ENCODE measurements at regions of chr18 and their contacts with region 1.

Region 1: GRCh38 chr18:11654736-11655605 is 34.1 kb upstream of the GNAL start:
- DNase-seq: peak in 1 of 2 experiments; percentile 79
- H3K4me3 ChIP-seq: no peak overlapping the region
- H3K4me3 Mint-ChIP-seq: peak overlapping the region; percentile 44
- H3K27ac Mint-ChIP-seq: no peak overlapping the region
- H3K4me1 ChIP-seq: no peaks in the 10 kb centered on the region
- H3K4me1 Mint-ChIP-seq: no peaks in the 10 kb centered on the region
- H3K27me3 ChIP-seq: no peaks in the 10 kb centered on the region
- H3K27me3 Mint-ChIP-seq: peaks cover 10% of the 10 kb centered on the region
- CTCF ChIP-seq: peak; percentile 83 to 88

Region 2: GRCh38 chr18:11695736-11696135 is 40.8 kb after region 1 on chr18:
- CTCF ChIA-PET with region 1: no interaction called
- POLR2A ChIA-PET with region 1: no interaction called
- intact Hi-C with region 1: no loop called
- DNase-seq: no peak
- H3K4me3 ChIP-seq: no peak overlapping the region
- H3K4me3 Mint-ChIP-seq: no peak overlapping the region
- H3K27ac Mint-ChIP-seq: no peak overlapping the region
- H3K4me1 ChIP-seq: no peaks in the 10 kb centered on the region
- H3K4me1 Mint-ChIP-seq: peaks cover 9% of the 10 kb centered on the region
- H3K27me3 ChIP-seq: no peaks in the 10 kb centered on the region
- H3K27me3 Mint-ChIP-seq: no peaks in the 10 kb centered on the region
- CTCF ChIP-seq: no peak

Region 3: DNA sequence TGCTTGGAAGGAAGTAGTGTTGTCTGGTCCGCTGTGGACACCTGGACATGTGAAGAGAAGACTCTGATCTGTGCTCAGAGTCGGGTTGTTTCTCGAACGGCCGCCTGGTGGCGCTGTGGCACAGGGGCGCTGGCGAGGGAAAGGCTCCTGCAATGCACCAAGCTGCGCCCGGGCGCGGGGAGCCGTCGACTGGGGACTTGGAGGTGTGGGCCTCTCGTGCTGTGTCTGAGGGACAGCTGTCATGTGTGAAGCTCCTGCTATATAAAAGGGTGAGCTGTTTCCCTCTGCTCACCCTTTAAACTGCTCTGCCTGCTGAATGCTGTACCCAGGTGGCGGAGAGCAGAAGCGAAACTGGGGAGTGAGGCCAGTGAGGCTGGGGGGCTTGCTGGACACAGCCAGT is 78.1 kb after region 1 on chr18:
- CTCF ChIA-PET with region 1: interaction called, 52 read pairs
- POLR2A ChIA-PET with region 1: no interaction called
- intact Hi-C with region 1: loop called (anchors 1 kb)
- DNase-seq: peak; percentile 81 to 88
- H3K4me3 ChIP-seq: no peak overlapping the region
- H3K4me3 Mint-ChIP-seq: no peak overlapping the region
- H3K27ac Mint-ChIP-seq: no peak overlapping the region
- H3K4me1 ChIP-seq: peaks cover 4% of the 10 kb centered on the region; the same call in 1 of the 2 replicates
- H3K4me1 Mint-ChIP-seq: no peaks in the 10 kb centered on the region
- H3K27me3 ChIP-seq: no peaks in the 10 kb centered on the region
- H3K27me3 Mint-ChIP-seq: no peaks in the 10 kb centered on the region
- CTCF ChIP-seq: peak; percentile 92 to 96

Region 4: GRCh38 chr18:11741505-11742145 is 86.7 kb after region 1 on chr18:
- CTCF ChIA-PET with region 1: interaction called, 5 read pairs
- POLR2A ChIA-PET with region 1: no interaction called
- intact Hi-C with region 1: loop called (anchors 5 kb)
- DNase-seq: peak in 1 of 2 experiments; percentile 24
- H3K4me3 ChIP-seq: no peak overlapping the region
- H3K4me3 Mint-ChIP-seq: no peak overlapping the region
- H3K27ac Mint-ChIP-seq: no peak overlapping the region
- H3K4me1 ChIP-seq: no peaks in the 10 kb centered on the region
- H3K4me1 Mint-ChIP-seq: no peaks in the 10 kb centered on the region
- H3K27me3 ChIP-seq: no peaks in the 10 kb centered on the region
- H3K27me3 Mint-ChIP-seq: no peaks in the 10 kb centered on the region
- CTCF ChIP-seq: peak; percentile 68 to 69

Region 5: GRCh38 chr18:11828786-11829432 is 173.9 kb after region 1 on chr18:
- CTCF ChIA-PET with region 1: no interaction called
- POLR2A ChIA-PET with region 1: no interaction called
- intact Hi-C with region 1: no loop called
- DNase-seq: no peak
- H3K4me3 ChIP-seq: no peak overlapping the region
- H3K4me3 Mint-ChIP-seq: no peak overlapping the region
- H3K27ac Mint-ChIP-seq: no peak overlapping the region
- H3K4me1 ChIP-seq: peaks cover 14% of the 10 kb centered on the region
- H3K4me1 Mint-ChIP-seq: peaks cover 8% of the 10 kb centered on the region
- H3K27me3 ChIP-seq: no peaks in the 10 kb centered on the region
- H3K27me3 Mint-ChIP-seq: no peaks in the 10 kb centered on the region
- CTCF ChIP-seq: no peak

Region 6: DNA sequence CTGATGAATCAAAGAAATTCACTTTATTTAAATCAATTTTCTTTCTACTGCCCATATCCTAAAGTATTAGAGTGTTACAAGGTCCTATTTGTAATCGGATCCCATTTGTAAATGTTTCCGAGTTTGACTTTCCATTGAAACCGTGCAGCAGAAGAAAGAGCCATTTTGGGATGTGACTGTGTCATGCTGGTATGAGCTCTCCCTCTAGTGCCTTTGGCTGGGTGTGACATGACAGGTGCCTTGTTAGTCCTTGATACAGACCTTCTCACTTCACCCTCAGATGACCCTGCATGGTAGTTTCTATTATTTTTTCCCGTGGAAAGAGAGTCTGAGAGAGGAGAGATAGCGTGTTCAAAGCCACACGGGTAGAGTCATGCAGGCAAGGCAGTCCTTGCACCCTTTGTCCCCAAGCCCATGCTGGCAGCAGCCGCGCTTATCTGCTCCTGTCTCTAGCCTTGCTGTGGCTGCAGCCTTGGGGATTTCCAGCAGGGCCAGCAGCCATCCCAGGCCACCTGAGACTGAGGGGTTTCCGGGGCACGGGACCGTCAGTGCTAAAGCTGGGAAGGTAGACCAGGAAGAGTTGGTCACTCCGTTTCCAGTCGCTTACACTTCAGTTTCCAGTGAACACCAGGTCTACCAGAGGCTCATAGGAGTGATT is 217.6 kb after region 1 on chr18:
- CTCF ChIA-PET with region 1: no interaction called
- POLR2A ChIA-PET with region 1: no interaction called
- intact Hi-C with region 1: loop called (anchors 1 kb)
- DNase-seq: peak; percentile 68 to 71
- H3K4me3 ChIP-seq: no peak overlapping the region
- H3K4me3 Mint-ChIP-seq: no peak overlapping the region
- H3K27ac Mint-ChIP-seq: no peak overlapping the region
- H3K4me1 ChIP-seq: peaks cover 10% of the 10 kb centered on the region; the same call in 1 of the 2 replicates
- H3K4me1 Mint-ChIP-seq: peaks cover 7% of the 10 kb centered on the region
- H3K27me3 ChIP-seq: no peaks in the 10 kb centered on the region
- H3K27me3 Mint-ChIP-seq: no peaks in the 10 kb centered on the region
- CTCF ChIP-seq: peak; percentile 74 to 80

Region 7: DNA sequence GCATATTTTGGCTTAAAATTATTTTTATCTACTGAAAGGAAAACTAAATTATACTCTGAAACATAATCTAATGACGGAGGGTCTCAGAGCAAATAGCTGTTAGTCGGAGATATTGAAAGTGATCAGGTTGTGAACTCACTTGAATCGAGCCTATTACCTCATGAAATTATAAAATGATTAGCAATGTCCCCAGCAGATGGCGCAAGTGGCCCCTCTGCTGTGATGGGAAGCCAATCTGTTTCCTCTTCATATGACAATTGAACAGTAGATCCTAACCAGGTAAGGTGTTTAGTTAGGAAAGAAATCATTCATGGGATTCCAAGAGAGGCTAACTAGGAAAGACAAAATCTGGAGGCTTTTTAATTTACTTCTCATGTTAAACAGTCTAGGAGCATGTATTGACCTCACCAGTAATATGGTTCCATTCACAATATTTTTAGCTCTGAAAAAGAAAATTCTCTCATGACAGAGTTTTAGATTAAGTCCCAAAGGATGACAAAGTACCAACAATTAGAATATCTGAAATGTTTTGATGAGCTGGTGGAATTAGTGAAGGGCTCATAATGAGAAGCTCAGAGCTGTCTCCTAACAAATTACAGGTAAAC is 283.0 kb after region 1 on chr18:
- CTCF ChIA-PET with region 1: no interaction called
- POLR2A ChIA-PET with region 1: no interaction called
- intact Hi-C with region 1: loop called (anchors 5 kb)
- DNase-seq: peak; percentile 67 to 83
- H3K4me3 ChIP-seq: no peak overlapping the region
- H3K4me3 Mint-ChIP-seq: no peak overlapping the region
- H3K27ac Mint-ChIP-seq: no peak overlapping the region
- H3K4me1 ChIP-seq: no peaks in the 10 kb centered on the region; the same call in 1 of the 2 replicates
- H3K4me1 Mint-ChIP-seq: no peaks in the 10 kb centered on the region
- H3K27me3 ChIP-seq: no peaks in the 10 kb centered on the region
- H3K27me3 Mint-ChIP-seq: no peaks in the 10 kb centered on the region
- CTCF ChIP-seq: peak; percentile 76 to 79

Region 8: DNA sequence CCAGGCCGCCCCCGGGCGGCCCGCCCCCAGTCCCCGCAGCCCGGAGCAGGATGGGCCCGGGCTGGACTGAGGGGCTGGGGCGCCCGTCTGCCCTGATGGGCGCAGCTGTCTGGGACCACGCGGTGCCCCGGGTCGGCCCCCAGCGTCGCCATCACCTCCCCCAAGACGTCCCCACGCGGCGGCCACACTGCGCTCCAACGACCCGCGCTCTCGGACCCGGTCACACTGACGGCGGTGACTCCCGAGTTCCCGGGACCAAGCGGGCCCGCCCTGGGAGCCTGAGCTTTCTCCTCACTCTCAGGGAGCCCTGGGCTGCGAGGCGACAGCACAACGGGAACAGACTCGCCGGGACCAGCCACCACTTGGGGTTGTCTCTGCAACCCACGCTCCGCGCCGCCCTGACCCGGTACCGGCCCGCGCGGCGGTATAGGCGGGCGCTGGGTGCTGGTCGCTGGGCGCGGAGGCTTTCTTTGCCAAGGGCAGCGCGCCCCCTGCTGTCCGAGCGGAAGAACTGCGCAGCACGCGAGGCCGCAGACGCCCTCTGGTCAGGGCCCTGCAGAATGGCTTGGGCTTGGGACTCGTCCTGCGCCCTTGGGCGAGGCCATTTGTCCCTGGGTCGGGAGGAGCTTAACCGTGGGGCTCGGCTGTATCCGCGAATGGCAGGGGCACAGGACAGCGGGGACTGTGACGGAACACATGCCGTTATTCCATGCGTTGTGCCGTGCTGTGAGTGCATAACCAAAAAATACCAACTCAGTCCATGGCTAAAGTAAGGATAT is 383.9 kb after region 1 on chr18:
- CTCF ChIA-PET with region 1: interaction called, 6 read pairs
- POLR2A ChIA-PET with region 1: no interaction called
- intact Hi-C with region 1: loop called (anchors 1 kb)
- DNase-seq: peak; percentile 83 to 90
- H3K4me3 ChIP-seq: peak overlapping the region; percentile 52
- H3K4me3 Mint-ChIP-seq: peak overlapping the region; percentile 80
- H3K27ac Mint-ChIP-seq: no peak overlapping the region
- H3K4me1 ChIP-seq: peaks cover 3% of the 10 kb centered on the region; the same call in 1 of the 2 replicates
- H3K4me1 Mint-ChIP-seq: no peaks in the 10 kb centered on the region
- H3K27me3 ChIP-seq: no peaks in the 10 kb centered on the region
- H3K27me3 Mint-ChIP-seq: peaks cover 2% of the 10 kb centered on the region
- CTCF ChIP-seq: peak; percentile 96 to 97